GM10248 (cell line): ENCODE measurements at regions of chr2 and their contacts with region 1.

Region 1: DNA sequence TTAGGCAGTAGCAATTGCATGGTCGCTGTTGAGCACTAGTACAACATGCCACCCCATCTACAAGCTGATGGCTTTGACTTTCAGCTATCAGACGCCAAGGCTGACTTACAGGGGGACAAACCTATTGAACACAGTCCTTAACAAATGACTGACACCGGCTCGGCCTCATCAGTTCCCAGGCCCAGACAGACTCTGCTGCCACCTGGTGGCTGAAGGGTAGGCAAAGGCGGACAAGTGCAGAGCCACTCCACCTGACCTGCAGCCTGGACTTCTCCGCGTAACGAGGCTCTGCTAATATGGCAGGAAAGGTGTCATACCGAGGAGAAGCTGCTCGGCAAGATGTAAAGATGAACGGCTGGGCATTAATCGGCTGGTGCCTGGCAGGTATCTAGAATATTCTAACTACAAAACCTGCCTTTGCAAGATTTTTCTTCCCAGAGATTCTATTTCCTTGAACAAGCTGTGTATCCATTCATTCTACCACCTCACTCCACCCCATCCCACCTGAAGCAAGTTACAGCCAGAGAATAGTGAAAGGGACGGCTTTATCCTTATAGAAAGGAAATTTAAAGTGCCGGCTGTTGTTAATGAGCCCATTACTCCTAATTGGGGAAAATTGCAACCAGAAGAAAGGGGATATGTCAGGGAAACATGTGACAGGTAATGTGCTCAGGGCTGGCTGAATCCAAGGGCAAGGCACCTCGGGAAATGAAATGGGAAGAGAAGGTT is 67.4 kb downstream of the STEAP3 start:
- DNase-seq: peak; percentile 67
- CTCF ChIP-seq: peak; percentile 97

Region 2: GRCh38 chr2:119011162-119011909 is 279.7 kb before region 1 on chr2:
- CTCF ChIA-PET with region 1: interaction called, 17 read pairs
- POLR2A ChIA-PET with region 1: no interaction called
- DNase-seq: peak; percentile 56
- CTCF ChIP-seq: peak; percentile 46

Region 3: DNA sequence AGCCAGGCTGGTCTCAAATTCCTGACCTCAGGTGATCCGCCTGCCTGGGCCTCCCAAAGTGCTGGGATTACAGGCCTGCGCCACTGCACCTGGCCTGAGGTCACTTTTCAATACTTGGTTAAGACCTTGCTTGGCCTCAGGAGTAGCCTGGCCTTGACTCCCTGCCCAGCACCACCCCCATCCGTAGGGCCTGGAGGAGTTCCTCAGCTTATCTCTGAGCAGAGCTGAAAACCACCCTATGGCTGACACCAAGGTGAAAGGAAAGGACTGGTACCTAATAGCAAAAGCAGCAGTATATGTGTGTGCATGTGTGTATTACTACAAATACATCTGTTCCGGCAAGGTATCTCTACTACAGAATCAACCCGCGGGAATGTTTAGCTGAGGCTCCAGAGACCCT is 11.4 kb before region 1 on chr2:
- CTCF ChIA-PET with region 1: interaction called, 32 read pairs
- POLR2A ChIA-PET with region 1: no interaction called
- DNase-seq: no peak
- CTCF ChIP-seq: no peak

Region 4: DNA sequence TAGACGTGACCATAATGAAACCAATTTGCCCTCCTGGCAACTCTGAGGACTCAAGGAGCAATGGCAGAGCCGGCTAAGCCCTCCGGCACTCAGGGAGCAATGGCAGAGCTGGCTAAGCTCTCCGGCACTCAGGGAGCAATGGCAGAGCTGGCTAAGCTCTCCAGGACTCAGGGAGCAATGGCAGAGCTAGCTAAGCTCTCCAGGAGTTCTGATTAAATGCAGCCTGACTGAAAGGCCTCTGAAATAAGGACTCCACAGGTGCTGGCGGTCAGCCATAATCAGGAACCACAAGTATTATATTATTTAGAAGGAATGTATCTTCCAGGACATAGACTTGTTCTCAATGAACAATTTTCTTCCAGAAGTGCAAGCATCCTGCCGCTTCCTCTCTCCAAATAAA is 10.4 kb after region 1 on chr2:
- CTCF ChIA-PET with region 1: interaction called, 43 read pairs
- POLR2A ChIA-PET with region 1: no interaction called
- DNase-seq: no peak
- CTCF ChIP-seq: no peak

Region 5: DNA sequence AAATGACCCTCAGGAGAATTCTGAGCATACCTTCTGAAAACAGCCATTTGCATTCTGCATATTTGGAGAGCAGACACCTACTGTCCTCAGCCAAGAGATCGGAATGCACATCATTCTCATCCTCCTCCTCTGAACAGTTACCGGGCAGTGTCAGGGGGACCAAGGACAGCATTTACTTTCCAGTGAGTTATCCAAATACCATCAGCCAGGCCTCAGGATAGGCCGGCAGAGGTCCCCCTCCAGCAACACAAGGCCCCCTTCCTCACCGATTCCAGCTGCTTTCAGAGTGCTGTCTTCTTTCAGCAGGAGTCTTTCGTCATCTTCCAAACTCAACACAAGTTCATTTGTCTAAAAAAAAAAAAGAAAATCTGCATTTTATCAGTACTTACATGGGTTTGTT is 20.3 kb after region 1 on chr2:
- CTCF ChIA-PET with region 1: interaction called, 10 read pairs
- POLR2A ChIA-PET with region 1: no interaction called
- DNase-seq: no peak
- CTCF ChIP-seq: no peak

Region 6: DNA sequence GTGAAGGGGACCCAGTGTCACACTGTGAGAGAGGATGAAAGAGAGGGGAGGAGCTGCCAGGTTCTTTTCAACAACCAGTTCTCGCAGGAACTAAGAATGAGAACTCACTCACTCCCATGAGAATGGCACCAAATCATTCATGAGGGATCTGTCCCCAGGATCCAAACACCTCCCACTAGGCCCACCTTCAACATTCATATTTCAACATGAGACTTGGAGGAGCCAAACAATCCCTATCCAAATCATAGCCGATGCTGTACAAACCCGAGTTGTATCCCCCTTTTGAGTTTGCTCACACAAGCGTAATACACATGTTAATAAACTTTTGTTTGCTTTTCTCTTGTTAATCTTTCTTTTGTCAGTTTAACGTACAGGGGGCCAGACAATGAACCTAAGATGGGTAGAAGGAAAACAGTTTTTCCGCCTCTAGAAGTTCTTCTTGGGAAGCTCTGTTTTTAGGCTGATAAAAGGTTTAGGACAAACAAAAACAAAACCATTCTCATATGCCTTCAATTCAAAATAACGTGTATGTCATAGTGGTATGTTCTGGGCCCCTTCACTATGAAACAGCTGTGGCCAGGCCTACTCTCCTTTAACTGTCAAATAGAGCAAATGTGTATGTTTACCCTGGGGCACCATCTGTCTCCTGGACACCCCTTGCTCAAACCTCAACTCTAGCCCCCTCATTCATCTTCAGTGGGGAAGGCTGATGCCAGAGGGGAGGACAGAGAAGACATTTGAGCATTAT is 131.5 kb after region 1 on chr2:
- CTCF ChIA-PET with region 1: no interaction called
- POLR2A ChIA-PET with region 1: no interaction called
- DNase-seq: no peak
- CTCF ChIP-seq: no peak